ENCODE measurements at regions of chr9 and their contacts with region 1.

Region 1: DNA sequence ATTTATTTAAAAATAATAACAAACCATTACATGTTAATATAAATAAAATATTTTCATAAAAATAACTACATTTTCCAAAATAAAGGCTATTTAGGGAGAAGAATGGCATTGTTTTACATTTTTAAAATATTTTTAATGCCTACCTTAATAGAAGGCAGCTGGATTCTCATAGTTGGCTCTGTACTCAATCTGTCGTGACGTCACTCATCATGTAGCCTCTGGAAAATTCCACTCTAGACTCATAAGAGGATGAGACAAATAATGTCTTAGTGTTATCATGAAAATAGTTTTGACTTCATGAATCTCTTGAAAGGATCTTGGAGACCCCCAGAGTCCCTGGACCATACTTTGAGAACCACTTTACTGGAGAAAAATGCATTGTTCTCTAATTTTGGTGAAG is 93.1 kb downstream of the NXNL2 start:
- DNase-seq: no peak
- H3K4me3 ChIP-seq: no peak overlapping the region
- H3K4me3 Mint-ChIP-seq: no peak overlapping the region
- H3K27ac Mint-ChIP-seq: no peak overlapping the region
- H3K4me1 ChIP-seq: no peaks in the 10 kb centered on the region
- H3K4me1 Mint-ChIP-seq: no peaks in the 10 kb centered on the region
- H3K27me3 ChIP-seq: no peaks in the 10 kb centered on the region
- H3K27me3 Mint-ChIP-seq: no peaks in the 10 kb centered on the region
- CTCF ChIP-seq: no peak

Region 2: DNA sequence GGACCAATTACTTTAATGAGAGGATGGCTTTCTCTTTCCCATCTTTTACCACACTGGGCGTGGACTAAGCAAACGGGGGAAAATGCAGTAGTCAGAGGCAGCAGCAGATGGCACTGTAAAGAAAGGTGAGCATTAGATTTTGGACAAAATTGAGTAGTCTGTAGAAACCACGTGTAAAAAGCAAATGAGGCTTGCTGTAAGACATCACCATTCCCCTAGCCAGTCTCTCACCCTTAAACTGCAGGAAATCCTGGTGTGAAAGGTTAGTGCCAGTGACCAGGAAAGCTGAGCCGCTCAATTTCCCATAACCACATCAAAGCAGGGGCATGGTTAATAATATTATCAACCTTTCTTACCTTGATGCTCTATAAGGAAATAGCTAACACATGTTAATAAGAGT is 521.6 kb before region 1 on chr9:
- CTCF ChIA-PET with region 1: interaction called, 12 read pairs
- POLR2A ChIA-PET with region 1: no interaction called
- intact Hi-C with region 1: no loop called
- DNase-seq: peak in 1 of 2 experiments; percentile 25
- H3K4me3 ChIP-seq: no peak overlapping the region
- H3K4me3 Mint-ChIP-seq: no peak overlapping the region
- H3K27ac Mint-ChIP-seq: no peak overlapping the region
- H3K4me1 ChIP-seq: no peaks in the 10 kb centered on the region
- H3K4me1 Mint-ChIP-seq: no peaks in the 10 kb centered on the region
- H3K27me3 ChIP-seq: no peaks in the 10 kb centered on the region
- H3K27me3 Mint-ChIP-seq: peaks cover 3% of the 10 kb centered on the region
- CTCF ChIP-seq: peak; percentile 25 to 40

Region 3: GRCh38 chr9:88660611-88661010 is 32.5 kb after region 1 on chr9:
- CTCF ChIA-PET with region 1: no interaction called
- POLR2A ChIA-PET with region 1: no interaction called
- intact Hi-C with region 1: no loop called
- DNase-seq: peak; percentile 35 to 46
- H3K4me3 ChIP-seq: no peak overlapping the region
- H3K4me3 Mint-ChIP-seq: no peak overlapping the region
- H3K27ac Mint-ChIP-seq: no peak overlapping the region
- H3K4me1 ChIP-seq: no peaks in the 10 kb centered on the region
- H3K4me1 Mint-ChIP-seq: no peaks in the 10 kb centered on the region
- H3K27me3 ChIP-seq: no peaks in the 10 kb centered on the region
- H3K27me3 Mint-ChIP-seq: no peaks in the 10 kb centered on the region
- CTCF ChIP-seq: peak; percentile 23 to 39

Region 4: DNA sequence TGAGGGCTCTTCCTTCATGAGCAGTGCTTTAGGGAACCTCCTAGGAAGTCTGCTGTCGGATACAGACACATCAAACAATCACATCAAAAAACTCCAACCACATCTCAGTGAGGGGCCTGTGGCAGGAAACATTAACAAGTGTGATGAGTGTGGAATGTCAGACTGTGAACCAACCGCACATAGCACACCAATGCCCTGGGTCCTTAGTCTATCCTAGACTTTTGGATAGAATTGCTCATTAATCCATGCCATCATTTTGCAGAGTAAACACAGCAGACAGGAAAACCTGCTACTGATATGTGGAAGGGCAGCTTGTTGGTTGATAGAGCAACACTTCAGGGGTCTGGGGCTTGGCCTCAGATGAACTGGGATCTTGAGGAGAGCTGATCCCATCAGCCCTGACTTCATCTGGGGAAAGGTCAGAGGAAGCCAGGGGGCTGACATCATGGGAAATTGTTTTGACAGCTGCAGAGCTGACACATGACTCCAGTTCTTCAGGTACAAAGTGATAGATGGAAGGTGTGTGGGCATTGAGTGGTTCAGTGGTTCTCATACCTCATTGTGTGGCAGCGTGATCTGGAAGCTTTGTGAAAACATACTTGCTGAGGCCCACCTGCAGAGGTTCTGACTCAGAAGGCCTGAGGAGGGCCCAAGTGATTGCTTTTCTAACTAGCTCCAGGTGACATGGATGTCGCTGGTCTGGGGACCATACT is 1821.3 kb after region 1 on chr9:
- CTCF ChIA-PET with region 1: no interaction called
- POLR2A ChIA-PET with region 1: no interaction called
- intact Hi-C with region 1: no loop called
- DNase-seq: no peak
- H3K4me3 ChIP-seq: no peak overlapping the region
- H3K4me3 Mint-ChIP-seq: no peak overlapping the region
- H3K27ac Mint-ChIP-seq: no peak overlapping the region
- H3K4me1 ChIP-seq: no peaks in the 10 kb centered on the region
- H3K4me1 Mint-ChIP-seq: no peaks in the 10 kb centered on the region
- H3K27me3 ChIP-seq: no peaks in the 10 kb centered on the region
- H3K27me3 Mint-ChIP-seq: no peaks in the 10 kb centered on the region
- CTCF ChIP-seq: no peak

Measured in Caco-2 (cell line).